Activated naive CD4-positive, alpha-beta T cell treated with anti-CD3 and anti-CD28 coated beads for 36 hours (primary cell): ENCODE measurements at regions of chr1 and their contacts with region 1.

Region 1: DNA sequence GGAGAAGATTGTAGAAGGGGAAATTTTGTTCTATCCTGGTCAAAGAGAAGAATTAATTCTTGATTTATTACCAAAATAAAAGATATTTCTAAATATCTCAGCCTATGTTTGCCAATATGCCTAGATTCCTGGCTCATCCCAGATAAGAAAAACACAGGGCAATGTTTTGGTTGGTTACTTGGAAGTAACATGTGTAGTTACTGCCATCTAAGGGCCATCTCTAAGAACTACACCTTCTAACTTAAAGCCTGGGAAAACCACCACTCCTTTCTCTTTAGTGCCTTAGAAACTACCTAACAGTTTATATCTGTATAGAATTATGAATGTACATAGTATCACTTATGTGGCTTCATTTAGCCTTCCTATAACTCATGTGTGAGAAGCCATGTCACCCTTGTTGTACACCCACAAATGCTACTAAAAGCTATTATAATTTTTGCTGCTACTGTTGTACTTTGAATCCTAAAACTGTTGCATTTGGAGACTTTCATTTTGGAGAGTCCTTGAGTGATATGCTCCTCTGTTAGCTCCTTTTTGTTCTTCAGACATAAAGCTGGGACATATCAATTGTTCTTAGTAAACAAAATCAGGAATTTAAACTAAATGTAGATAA is 4.5 kb downstream of the AIM2 start:
- DNase-seq: no peak
- H3K4me3 Mint-ChIP-seq: no peak overlapping the region
- H3K27ac Mint-ChIP-seq: no peak overlapping the region
- H3K4me1 Mint-ChIP-seq: peaks cover 34% of the 10 kb centered on the region
- H3K27me3 Mint-ChIP-seq: no peaks in the 10 kb centered on the region

Region 2: GRCh38 chr1:157992031-157992832 is 1079.8 kb before region 1 on chr1:
- CTCF ChIA-PET with region 1: interaction called, 3 read pairs
- intact Hi-C with region 1: loop called (anchors 10 kb)
- DNase-seq: peak; percentile 66
- H3K4me3 Mint-ChIP-seq: no peak overlapping the region
- H3K27ac Mint-ChIP-seq: no peak overlapping the region
- H3K4me1 Mint-ChIP-seq: peaks cover 5% of the 10 kb centered on the region
- H3K27me3 Mint-ChIP-seq: peaks cover 48% of the 10 kb centered on the region

Region 3: DNA sequence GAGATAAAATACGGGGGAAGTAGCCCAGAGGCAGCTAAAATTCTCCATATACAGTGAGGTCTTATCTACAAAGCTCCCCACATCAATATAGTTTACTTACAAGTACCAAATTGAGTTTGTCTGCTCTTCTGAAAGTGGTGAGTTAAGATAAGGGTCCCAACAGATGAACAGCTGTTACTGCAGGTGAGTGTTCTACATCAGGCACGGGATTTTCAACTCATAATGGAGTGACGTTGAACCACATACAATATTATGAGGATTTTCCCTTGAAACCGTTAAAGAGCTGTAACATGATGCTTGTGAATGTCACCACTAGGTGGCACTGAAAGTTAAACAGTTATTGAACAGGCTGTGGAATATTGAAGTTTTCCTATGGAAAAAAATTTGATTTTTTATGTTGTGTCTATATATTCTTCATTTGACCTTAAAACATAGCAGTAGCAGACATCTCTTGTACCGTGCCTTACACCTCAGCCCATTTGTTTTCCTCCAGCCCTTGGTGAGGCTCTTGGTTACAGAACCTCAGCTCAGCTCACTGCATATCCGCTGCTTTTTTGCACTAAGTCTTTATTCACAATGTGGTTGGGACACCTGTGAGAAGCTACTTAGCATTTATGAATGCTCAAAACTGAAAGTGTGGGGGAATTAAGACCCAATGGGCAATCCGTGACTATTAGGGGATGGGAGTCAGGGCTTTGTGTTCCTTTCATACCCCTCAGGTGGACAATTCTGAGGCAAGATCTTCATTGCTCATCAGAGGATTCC is 868.2 kb before region 1 on chr1:
- CTCF ChIA-PET with region 1: interaction called, 12 read pairs
- intact Hi-C with region 1: loop called (anchors 1 kb)
- DNase-seq: peak; percentile 23
- H3K4me3 Mint-ChIP-seq: no peak overlapping the region
- H3K27ac Mint-ChIP-seq: no peak overlapping the region
- H3K4me1 Mint-ChIP-seq: peaks cover 4% of the 10 kb centered on the region
- H3K27me3 Mint-ChIP-seq: peaks cover 25% of the 10 kb centered on the region

Region 4: DNA sequence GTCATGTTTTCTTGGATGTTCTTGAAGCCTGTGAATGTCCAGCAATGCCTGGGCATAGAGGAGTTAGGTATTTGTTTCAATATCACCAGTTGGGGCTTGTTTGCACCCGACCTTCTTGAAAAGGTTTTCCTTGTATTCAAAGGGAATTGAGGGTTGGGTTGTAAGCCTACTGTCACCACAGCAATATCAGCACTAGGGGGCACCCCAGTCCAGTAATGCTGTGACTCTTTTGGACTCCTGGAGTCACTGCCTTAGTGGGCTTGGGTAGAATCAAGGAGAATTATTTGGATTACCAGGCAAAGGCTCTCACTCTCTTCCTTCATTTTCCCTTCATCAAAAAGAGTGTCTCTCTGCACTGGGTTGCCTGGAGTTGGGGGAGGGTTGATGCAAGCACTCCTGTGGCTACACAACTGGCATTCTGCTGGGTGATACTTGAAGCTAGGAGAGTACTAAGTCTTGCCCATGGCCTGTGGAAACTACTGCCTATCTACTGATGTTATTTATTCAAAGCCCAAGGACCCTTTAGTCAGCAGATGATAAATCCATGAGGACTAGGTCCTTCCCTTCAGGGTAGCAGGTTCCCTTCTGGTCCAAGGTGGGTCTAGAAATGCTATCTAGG is 565.6 kb before region 1 on chr1:
- CTCF ChIA-PET with region 1: interaction called, 5 read pairs
- intact Hi-C with region 1: loop called (anchors 1 kb)
- DNase-seq: peak; percentile 61
- H3K4me3 Mint-ChIP-seq: no peak overlapping the region
- H3K27ac Mint-ChIP-seq: no peak overlapping the region
- H3K4me1 Mint-ChIP-seq: no peaks in the 10 kb centered on the region
- H3K27me3 Mint-ChIP-seq: peaks cover 26% of the 10 kb centered on the region

Region 5: GRCh38 chr1:158793604-158794003 is 278.5 kb before region 1 on chr1:
- CTCF ChIA-PET with region 1: interaction called, 5 read pairs
- intact Hi-C with region 1: loop called (anchors 2 kb)
- DNase-seq: peak; percentile 47
- H3K4me3 Mint-ChIP-seq: no peak overlapping the region
- H3K27ac Mint-ChIP-seq: no peak overlapping the region
- H3K4me1 Mint-ChIP-seq: no peaks in the 10 kb centered on the region
- H3K27me3 Mint-ChIP-seq: peaks cover 2% of the 10 kb centered on the region

Region 6: GRCh38 chr1:159009704-159010361 is 62.2 kb before region 1 on chr1 and contains the start of gene IFI16:
- CTCF ChIA-PET with region 1: interaction called, 5 read pairs
- intact Hi-C with region 1: loop called (anchors 1 kb)
- DNase-seq: peak; percentile 82
- H3K4me3 Mint-ChIP-seq: peak within 1 kb of the TSS; percentile 91
- H3K27ac Mint-ChIP-seq: peak within 1 kb of the TSS; percentile 99
- H3K4me1 Mint-ChIP-seq: peaks cover 39% of the 10 kb centered on the region
- H3K27me3 Mint-ChIP-seq: no peaks in the 10 kb centered on the region
- total RNA-seq, gene IFI16: 287 to 288 TPM

Region 7: DNA sequence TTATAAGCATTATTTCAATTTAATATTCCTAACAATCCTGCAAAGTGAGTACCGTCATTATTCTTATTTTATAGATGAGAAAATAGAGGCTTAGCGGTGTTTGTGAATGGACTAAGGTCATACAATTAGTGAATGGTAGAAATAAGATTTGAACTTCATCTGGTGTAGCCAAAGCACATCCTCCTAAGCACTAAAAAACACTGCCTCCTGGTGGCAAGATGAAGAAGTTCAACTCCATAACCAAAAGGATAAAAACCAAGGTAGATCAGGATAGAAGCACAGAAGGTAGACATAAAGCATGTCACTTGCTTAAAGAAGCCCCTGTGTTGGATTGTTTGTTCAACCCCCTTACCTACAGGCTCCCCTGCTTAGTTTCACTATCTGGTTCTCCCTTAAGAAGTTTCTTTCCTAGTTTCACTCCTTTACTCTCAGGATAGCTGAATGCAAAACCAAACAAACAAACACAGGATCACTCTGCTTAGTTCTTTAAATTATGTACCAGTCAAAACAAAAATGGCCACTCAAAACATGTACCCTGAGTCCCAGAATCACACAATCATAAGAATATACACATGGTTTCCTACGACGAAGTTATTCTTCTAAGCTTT is 17.2 kb after region 1 on chr1:
- CTCF ChIA-PET with region 1: interaction called, 50 read pairs
- intact Hi-C with region 1: loop called (anchors 1 kb)
- DNase-seq: peak; percentile 44
- H3K4me3 Mint-ChIP-seq: no peak overlapping the region
- H3K27ac Mint-ChIP-seq: peak overlapping the region; percentile 47
- H3K4me1 Mint-ChIP-seq: peaks cover 49% of the 10 kb centered on the region
- H3K27me3 Mint-ChIP-seq: no peaks in the 10 kb centered on the region

Region 8: GRCh38 chr1:159829273-159829634 is 757.2 kb after region 1 on chr1:
- CTCF ChIA-PET with region 1: no interaction called
- intact Hi-C with region 1: no loop called
- DNase-seq: no peak
- H3K4me3 Mint-ChIP-seq: no peak overlapping the region
- H3K27ac Mint-ChIP-seq: no peak overlapping the region
- H3K4me1 Mint-ChIP-seq: peaks cover 34% of the 10 kb centered on the region
- H3K27me3 Mint-ChIP-seq: no peaks in the 10 kb centered on the region